ENCODE measurements at regions of chr11 and their contacts with region 1.

Region 1: GRCh38 chr11:47578524-47579460 is at the starts of genes KBTBD4 and NDUFS3:
- DNase-seq: peak; percentile 86 to 94 (median 88)
- ATAC-seq: peak; percentile 93
- H3K4me3 ChIP-seq: peak within 1 kb of the TSS; percentile 97
- H3K27ac ChIP-seq: peak within 1 kb of the TSS; percentile 93
- H3K4me1 ChIP-seq: peaks cover 13 to 14% of the 10 kb centered on the region in 2 experiments; a peak in 4 of 5 replicates
- H3K27me3 ChIP-seq: no peaks in the 10 kb centered on the region; a peak in 1 of 5 replicates
- CTCF ChIP-seq: peak in 1 of 3 experiments; percentile 8; a peak in 1 of 6 replicates
- EP300 ChIP-seq: peak; percentile 53
- POLR2A ChIP-seq: peak; percentile 95
- RAD21 ChIP-seq: peak in 1 of 2 experiments; percentile 12; a peak in 1 of 4 replicates
- polyA plus RNA-seq, gene KBTBD4: 30.1 to 33.9 TPM
- polyA plus RNA-seq, gene NDUFS3: 38.7 to 82.3 TPM

Region 2: GRCh38 chr11:47565340-47566148 is 13.2 kb before region 1 on chr11 and contains the start of gene PTPMT1:
- CTCF ChIA-PET with region 1: no interaction called
- POLR2A ChIA-PET with region 1: interaction called, 23 read pairs
- in situ Hi-C with region 1: no loop called
- intact Hi-C with region 1: no loop called
- DNase-seq: peak; percentile 83 to 86 (median 85)
- ATAC-seq: peak; percentile 97
- H3K4me3 ChIP-seq: peak within 1 kb of the TSS; percentile 100
- H3K27ac ChIP-seq: peak within 1 kb of the TSS; percentile 96
- H3K4me1 ChIP-seq: peaks cover 10 to 40% of the 10 kb centered on the region in 2 experiments; a peak in 4 of 5 replicates
- H3K27me3 ChIP-seq: no peaks in the 10 kb centered on the region
- CTCF ChIP-seq: no peak
- EP300 ChIP-seq: no peak
- POLR2A ChIP-seq: peak; percentile 79
- RAD21 ChIP-seq: peak in 1 of 2 experiments; percentile 15; a peak in 1 of 4 replicates
- polyA plus RNA-seq, gene PTPMT1: 10.4 to 16.5 TPM

Region 3: GRCh38 chr11:47631473-47631872 is 52.7 kb after region 1 on chr11:
- CTCF ChIA-PET with region 1: no interaction called
- POLR2A ChIA-PET with region 1: no interaction called
- in situ Hi-C with region 1: no loop called
- intact Hi-C with region 1: no loop called
- DNase-seq: no peak
- ATAC-seq: no peak; the same call in 2 of the 3 replicates
- H3K4me3 ChIP-seq: no peak overlapping the region
- H3K27ac ChIP-seq: no peak overlapping the region
- H3K4me1 ChIP-seq: no peaks in the 10 kb centered on the region
- H3K27me3 ChIP-seq: no peaks in the 10 kb centered on the region
- CTCF ChIP-seq: no peak
- EP300 ChIP-seq: no peak
- POLR2A ChIP-seq: no peak
- RAD21 ChIP-seq: no peak